Right lobe of liver (tissue), 6 donors: ENCODE measurements at regions of chr2 and their contacts with region 1.

Region 1: DNA sequence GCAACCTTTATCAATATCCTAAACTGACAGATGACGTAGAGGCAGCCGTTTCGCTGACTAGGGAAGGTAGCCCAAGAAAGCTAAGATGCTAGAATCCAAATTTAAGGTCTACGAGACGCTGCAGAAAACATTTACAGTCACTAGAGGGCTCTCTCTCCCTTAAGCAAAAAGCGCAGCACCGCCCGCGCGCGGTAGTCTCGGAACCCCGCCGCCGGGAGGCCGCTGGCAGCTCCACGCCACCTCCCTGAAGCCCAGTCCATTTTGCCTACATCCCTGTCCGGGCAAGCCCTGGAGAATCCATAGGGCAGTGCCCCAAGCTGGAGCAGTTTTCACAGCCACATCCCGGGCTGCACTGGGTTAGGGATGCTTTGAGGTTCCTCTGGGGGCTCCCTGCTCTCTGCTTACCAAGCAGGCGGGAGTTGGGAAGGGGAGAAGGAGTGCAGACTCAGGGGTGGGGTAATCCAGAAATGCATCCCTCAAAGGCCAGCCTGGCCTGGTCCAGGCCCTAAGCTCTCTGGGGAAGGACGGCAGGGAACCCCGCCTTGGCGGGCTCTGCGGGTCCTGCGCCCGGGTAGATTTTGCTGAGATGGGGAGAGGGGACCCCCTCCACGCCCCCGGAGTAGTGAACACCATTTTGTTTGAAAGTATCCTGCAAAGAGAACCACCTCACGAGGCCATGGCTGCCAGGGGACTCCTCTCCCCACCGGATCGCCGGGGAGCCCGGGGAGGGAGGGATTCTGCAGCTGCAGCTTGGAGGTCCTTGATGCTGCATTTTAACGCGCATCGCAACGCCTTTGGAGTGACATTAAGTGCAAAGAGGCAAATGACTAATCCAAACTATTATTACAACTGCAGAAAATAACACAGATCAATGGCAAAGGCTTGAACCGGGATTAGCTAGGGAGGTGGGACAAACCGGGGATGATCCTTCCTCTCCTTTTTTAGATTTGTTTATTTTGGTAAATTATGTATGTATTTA is 1.3 kb upstream of the DPYSL5 start:
- DNase-seq: peak; percentile 70 to 76 (median 73)
- ATAC-seq: peak; percentile 91 to 97 (median 94)
- H3K4me3 ChIP-seq: no peak overlapping the region
- H3K27ac ChIP-seq: no peak overlapping the region
- H3K4me1 ChIP-seq: peaks cover 0 to 21% (median 3%) of the 10 kb centered on the region in 4 donors
- H3K27me3 ChIP-seq: peaks cover 0 to 28% of the 10 kb centered on the region in 2 donors
- CTCF ChIP-seq: peak; percentile 65 to 85 (median 78)
- POLR2A ChIP-seq: no peak

Region 2: GRCh38 chr2:26740890-26741302 is 105.7 kb before region 1 on chr2:
- intact Hi-C with region 1: no loop called
- DNase-seq: no peak
- ATAC-seq: no peak
- H3K4me3 ChIP-seq: no peak overlapping the region
- H3K27ac ChIP-seq: no peak overlapping the region
- H3K4me1 ChIP-seq: peaks cover 0 to 26% (median 10%) of the 10 kb centered on the region in 4 donors
- H3K27me3 ChIP-seq: no peaks in the 10 kb centered on the region
- CTCF ChIP-seq: no peak
- POLR2A ChIP-seq: no peak

Region 3: DNA sequence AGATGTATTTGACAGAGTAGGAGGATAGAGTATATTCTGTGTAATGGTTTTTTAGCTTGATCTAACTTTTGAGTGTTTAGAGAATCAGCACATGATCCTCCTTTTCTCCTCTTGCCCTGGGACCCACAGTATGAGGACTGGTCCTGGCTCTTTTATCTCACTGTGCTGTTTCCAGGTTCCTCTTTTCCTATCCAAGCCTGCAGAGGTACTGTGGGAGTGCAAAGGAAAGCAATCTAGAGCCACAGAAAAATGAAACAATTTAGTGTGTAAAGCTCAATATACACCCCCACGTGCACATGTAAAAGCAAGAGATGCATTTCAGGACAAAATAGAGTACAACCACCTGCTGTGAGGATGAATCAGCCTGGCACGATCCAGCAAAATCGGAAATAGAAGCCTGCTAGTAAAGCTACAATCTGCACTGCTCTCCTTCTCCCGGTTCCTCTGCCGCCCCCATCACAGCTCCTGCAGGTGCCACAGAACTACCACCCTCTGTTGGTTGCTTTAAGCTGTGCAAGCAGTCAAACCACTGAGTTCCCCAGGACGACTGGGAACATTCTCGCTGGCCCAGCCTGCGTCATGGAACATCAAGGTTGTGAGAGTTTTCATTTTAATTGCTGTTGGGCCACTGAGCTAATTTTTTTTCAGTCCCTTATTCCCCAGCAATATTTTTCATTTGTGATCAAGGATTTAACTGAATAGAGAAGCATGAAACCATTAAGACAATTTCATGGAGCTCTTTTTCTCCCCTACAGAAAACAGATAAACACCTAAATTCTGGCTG is 76.0 kb after region 1 on chr2:
- intact Hi-C with region 1: no loop called
- DNase-seq: peak in 1 of 3 donors; percentile 31
- ATAC-seq: peak; percentile 59 to 83 (median 76)
- H3K4me3 ChIP-seq: no peak overlapping the region
- H3K27ac ChIP-seq: no peak overlapping the region
- H3K4me1 ChIP-seq: no peaks in the 10 kb centered on the region
- H3K27me3 ChIP-seq: no peaks in the 10 kb centered on the region
- CTCF ChIP-seq: peak; percentile 37 to 49 (median 38)
- POLR2A ChIP-seq: no peak

Region 4: DNA sequence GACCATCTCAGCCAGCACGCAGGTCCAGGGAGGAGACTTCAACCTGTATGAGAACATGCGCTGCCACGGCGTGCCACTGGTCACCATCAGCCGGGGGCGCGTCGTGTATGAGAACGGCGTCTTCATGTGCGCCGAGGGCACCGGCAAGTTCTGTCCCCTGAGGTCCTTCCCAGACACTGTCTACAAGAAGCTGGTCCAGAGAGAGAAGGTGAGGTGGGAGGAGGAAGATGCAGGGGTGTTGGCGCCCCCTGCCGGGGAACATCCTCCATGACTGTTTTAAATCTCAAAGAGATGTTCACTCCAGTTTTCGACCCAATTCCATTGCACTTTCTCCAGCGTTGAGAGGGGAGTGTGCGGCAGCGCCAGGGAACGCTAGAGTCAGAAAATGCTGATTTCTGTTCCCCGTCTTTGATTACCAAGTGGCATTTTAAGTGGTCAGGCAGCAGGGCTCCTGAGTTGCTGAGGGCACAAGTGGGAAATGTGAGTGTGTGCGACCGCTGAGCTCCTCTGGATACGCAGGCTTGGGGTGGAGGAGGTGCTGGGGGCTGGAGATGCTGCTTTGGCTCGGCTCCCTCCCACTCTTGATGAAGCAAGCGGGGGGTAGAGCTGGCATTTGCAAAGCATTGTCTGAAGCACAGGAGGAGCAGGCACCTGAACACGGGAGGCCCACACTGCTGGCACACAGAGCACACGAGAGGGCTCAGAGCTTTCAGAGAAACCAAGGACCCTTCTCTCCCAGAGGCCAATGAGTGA is 96.1 kb after region 1 on chr2:
- intact Hi-C with region 1: loop called in 1 of 2 experiments (anchors 5 kb)
- DNase-seq: peak in 2 of 3 donors; percentile 53 to 70
- ATAC-seq: peak; percentile 71 to 86 (median 78)
- H3K4me3 ChIP-seq: no peak overlapping the region
- H3K27ac ChIP-seq: no peak overlapping the region
- H3K4me1 ChIP-seq: no peaks in the 10 kb centered on the region
- H3K27me3 ChIP-seq: peaks cover 0 to 4% of the 10 kb centered on the region in 2 donors
- CTCF ChIP-seq: peak; percentile 60 to 84 (median 81)
- POLR2A ChIP-seq: no peak

Region 5: GRCh38 chr2:26959331-26959730 is 112.7 kb after region 1 on chr2:
- intact Hi-C with region 1: no loop called
- DNase-seq: no peak
- ATAC-seq: peak in 1 of 4 donors; percentile 30
- H3K4me3 ChIP-seq: no peak overlapping the region
- H3K27ac ChIP-seq: no peak overlapping the region
- H3K4me1 ChIP-seq: no peaks in the 10 kb centered on the region
- H3K27me3 ChIP-seq: no peaks in the 10 kb centered on the region
- CTCF ChIP-seq: no peak
- POLR2A ChIP-seq: no peak

Region 6: GRCh38 chr2:26993768-26994167 is 147.2 kb after region 1 on chr2:
- intact Hi-C with region 1: no loop called
- DNase-seq: no peak
- ATAC-seq: no peak
- H3K4me3 ChIP-seq: no peak overlapping the region
- H3K27ac ChIP-seq: no peak overlapping the region
- H3K4me1 ChIP-seq: peaks cover 0 to 25% (median 10%) of the 10 kb centered on the region in 4 donors
- H3K27me3 ChIP-seq: no peaks in the 10 kb centered on the region
- CTCF ChIP-seq: no peak
- POLR2A ChIP-seq: no peak